SK-N-SH (cell line): ENCODE measurements at regions of chr18 and their contacts with region 1.

Region 1: GRCh38 chr18:45722899-45723298 is 1.1 kb upstream of the SLC14A1 start:
- DNase-seq: peak; percentile 81
- H3K4me3 ChIP-seq: peak overlapping the region in 1 of 2 experiments; percentile 36; a peak in 1 of 4 replicates
- H3K27ac ChIP-seq: no peak overlapping the region
- H3K4me1 ChIP-seq: peaks cover 0 to 17% of the 10 kb centered on the region in 2 experiments; a peak in 2 of 4 replicates
- H3K27me3 ChIP-seq: no peaks in the 10 kb centered on the region
- CTCF ChIP-seq: peak; percentile 80
- EP300 ChIP-seq: no peak
- RAD21 ChIP-seq: peak; percentile 82

Region 2: GRCh38 chr18:45738658-45739057 is 15.8 kb after region 1 on chr18:
- CTCF ChIA-PET with region 1: interaction called, 20 read pairs
- POLR2A ChIA-PET with region 1: no interaction called
- DNase-seq: no peak
- H3K4me3 ChIP-seq: no peak overlapping the region
- H3K27ac ChIP-seq: no peak overlapping the region
- H3K4me1 ChIP-seq: peaks cover 0 to 4% of the 10 kb centered on the region in 2 experiments; a peak in 1 of 4 replicates
- H3K27me3 ChIP-seq: no peaks in the 10 kb centered on the region
- CTCF ChIP-seq: 0 out of 2 replicates have a peak, but pooled peaks have one; percentile 7
- EP300 ChIP-seq: no peak
- RAD21 ChIP-seq: peak; percentile 13; the same call in 1 of the 2 replicates

Region 3: GRCh38 chr18:45839414-45840395 is 116.8 kb after region 1 on chr18:
- CTCF ChIA-PET with region 1: interaction called, 29 read pairs
- POLR2A ChIA-PET with region 1: no interaction called
- DNase-seq: peak; percentile 59
- H3K4me3 ChIP-seq: no peak overlapping the region
- H3K27ac ChIP-seq: no peak overlapping the region
- H3K4me1 ChIP-seq: peaks cover 12 to 15% of the 10 kb centered on the region in 2 experiments; a peak in 2 of 4 replicates
- H3K27me3 ChIP-seq: no peaks in the 10 kb centered on the region
- CTCF ChIP-seq: peak; percentile 79
- EP300 ChIP-seq: no peak
- RAD21 ChIP-seq: peak; percentile 67

Region 4: GRCh38 chr18:45974088-45974536 is 251.2 kb after region 1 on chr18:
- CTCF ChIA-PET with region 1: interaction called, 27 read pairs
- POLR2A ChIA-PET with region 1: no interaction called
- DNase-seq: peak; percentile 57
- H3K4me3 ChIP-seq: peak overlapping the region in 1 of 2 experiments; percentile 14; a peak in 2 of 4 replicates
- H3K27ac ChIP-seq: peak overlapping the region in 1 of 2 experiments; percentile 22; a peak in 1 of 4 replicates
- H3K4me1 ChIP-seq: no peaks in the 10 kb centered on the region
- H3K27me3 ChIP-seq: no peaks in the 10 kb centered on the region
- CTCF ChIP-seq: peak; percentile 91
- EP300 ChIP-seq: no peak
- RAD21 ChIP-seq: peak; percentile 94